Heart left ventricle (tissue), 16 donors: ENCODE measurements at regions of chr1 and their contacts with region 1.

Region 1: GRCh38 chr1:211578640-211579433 is at the start of gene SLC30A1:
- DNase-seq: peak; percentile 100
- ATAC-seq: peak; percentile 96 to 99 (median 98)
- H3K4me3 ChIP-seq: peak within 1 kb of the TSS; percentile 78 to 98 (median 90)
- H3K27ac ChIP-seq: peak within 1 kb of the TSS; percentile 92 to 99 (median 98)
- H3K4me1 ChIP-seq: peaks cover 0 to 66% (median 38%) of the 10 kb centered on the region in 12 donors
- H3K27me3 ChIP-seq: no peaks in the 10 kb centered on the region
- CTCF ChIP-seq: peak in 1 of 12 donors; percentile 25
- POLR2A ChIP-seq: peak; percentile 56 to 97
- total RNA-seq, gene SLC30A1: 8.6 to 29.2 (median 16.2) TPM

Region 2: DNA sequence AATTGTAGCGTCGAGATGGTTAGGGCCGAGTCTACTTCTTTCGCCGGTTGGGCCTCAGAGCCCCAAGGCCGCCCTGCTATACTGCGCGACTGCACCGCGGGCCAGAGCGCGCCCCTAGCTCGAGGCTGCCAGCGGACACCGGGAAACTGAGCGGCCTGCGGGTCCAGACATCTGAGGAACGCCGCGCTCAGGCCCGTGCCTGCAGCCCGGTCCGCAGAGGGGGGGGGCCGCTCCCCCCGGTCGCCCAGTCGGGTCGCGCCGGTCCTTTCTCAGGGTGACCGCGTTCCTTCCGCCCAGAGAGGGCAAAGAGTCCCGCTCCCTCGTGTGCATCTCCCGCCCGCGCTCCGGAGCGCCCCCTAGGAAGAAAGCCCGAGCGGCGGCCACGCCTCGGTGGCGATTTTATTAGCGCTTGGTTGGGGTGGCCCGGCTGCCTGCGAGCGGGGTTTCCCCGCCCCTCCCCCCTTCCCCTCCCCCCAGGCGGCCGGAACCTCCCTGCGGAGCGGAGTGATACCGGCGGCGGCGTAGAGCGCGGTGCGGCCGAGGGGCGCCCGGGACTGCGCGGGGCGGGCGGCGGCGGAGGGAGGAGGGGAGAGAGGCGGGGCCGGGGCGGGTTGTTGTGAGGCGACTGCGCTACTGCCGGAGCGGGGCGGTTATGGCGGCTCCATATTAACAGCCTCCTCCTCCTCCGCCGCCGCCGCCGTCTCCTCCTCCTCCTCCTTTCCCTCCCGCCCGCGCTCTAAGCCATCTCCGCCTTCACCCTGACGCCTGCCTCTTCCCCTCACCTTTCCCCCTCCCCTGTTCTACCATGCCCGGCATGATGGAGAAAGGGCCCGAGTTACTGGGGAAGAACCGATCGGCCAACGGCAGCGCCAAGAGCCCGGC is 319.8 kb before region 1 on chr1 and contains the start of gene RCOR3:
- intact Hi-C with region 1: loop called in 1 of 10 experiments (anchors 2 kb)
- DNase-seq: peak; percentile 96 to 98 (median 97)
- ATAC-seq: peak; percentile 83 to 94 (median 89)
- H3K4me3 ChIP-seq: peak within 1 kb of the TSS; percentile 70 to 98 (median 93)
- H3K27ac ChIP-seq: peak within 1 kb of the TSS; percentile 92 to 100 (median 98)
- H3K4me1 ChIP-seq: peaks cover 0 to 28% (median 16%) of the 10 kb centered on the region in 12 donors
- H3K27me3 ChIP-seq: no peaks in the 10 kb centered on the region
- CTCF ChIP-seq: peak; percentile 51 to 74 (median 62)
- POLR2A ChIP-seq: peak in 1 of 2 donors; percentile 69
- total RNA-seq, gene RCOR3: 28.9 to 60.1 (median 48.6) TPM

Region 3: DNA sequence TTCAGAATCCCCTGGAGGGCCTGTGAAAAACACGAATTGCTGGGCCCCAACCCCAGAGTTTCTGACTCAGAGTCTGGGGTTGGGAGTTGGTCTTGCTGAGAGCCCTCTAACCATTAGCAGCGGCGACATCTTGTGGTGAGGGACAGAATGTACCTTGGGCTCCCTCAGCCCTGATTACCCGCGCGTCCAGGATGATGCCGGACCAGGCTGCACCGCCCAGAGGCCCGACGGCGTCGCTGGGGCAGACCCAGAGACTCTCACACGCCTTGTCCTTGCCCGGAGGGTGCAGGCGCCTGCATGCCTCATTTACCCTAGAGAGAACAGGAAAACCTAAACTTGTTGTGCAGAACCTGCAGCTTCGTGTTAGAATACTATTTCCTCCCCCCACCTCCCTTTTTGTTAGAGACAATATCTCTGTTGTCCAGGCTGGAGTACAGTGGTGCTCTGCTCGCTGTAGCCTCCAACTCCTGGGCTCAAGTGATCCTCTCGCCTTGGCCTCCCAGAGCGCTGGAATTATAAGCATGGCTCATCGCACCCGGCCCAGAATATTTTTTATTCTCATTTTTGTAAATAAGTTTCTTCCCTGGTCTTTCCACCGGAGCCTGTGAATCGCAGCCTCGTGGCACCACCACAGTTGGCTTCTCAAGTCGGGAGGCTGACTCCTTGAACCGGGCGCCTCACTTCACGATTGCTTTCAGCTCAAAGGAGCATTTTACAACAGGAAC is 64.6 kb before region 1 on chr1:
- intact Hi-C with region 1: loop called in 6 of 10 experiments (anchors 2 to 10 kb)
- DNase-seq: peak; percentile 71 to 87 (median 81)
- ATAC-seq: peak; percentile 86 to 91 (median 88)
- H3K4me3 ChIP-seq: no peak overlapping the region
- H3K27ac ChIP-seq: no peak overlapping the region
- H3K4me1 ChIP-seq: peaks cover 0 to 17% (median 8%) of the 10 kb centered on the region in 12 donors
- H3K27me3 ChIP-seq: peaks cover 0 to 8% (median 0%) of the 10 kb centered on the region in 9 donors
- CTCF ChIP-seq: peak; percentile 64 to 86 (median 75)
- POLR2A ChIP-seq: no peak

Region 4: DNA sequence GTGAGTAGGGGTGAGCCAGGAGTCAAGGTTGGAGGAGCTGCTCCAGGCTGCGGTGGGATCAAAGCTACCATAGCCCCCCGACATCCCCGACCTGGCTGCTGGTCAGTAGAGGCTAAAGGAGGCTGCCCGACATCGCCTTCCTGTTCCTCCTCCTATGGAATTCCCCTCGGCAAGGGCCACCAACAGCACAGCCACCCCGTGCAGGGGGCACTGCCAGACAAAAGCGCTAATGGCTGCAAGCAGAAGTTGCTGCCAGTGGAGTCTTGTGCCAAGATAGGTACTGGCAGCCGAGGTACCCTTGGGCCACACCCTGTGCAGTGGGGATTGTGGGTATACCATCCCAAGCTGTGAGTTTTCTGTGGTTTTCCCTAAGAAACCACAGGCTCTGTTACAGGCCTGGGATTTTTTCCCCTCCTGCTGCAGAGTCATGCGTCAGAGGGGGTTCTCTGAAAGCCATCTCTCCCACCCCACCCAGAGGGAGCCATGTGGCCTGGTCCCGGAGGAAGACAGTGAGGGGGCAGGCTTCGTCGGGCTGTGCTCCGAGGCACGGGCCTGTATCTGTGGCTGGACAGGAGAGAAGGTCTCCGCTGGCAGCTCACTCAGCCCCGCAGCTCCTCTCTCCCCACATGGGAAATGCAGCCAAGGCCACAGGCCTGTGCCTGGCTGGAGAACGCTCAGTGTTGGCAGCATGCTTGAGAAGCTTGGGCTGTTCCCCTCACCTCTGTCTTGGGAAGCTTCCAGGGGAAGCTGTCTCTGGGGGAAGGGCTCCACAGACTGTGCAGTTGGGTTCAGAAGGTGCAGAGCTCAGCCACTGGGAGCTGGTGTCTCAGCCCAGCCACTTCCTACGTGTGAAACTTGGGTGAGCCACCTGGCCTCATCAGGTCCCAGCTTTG is 54.0 kb after region 1 on chr1:
- intact Hi-C with region 1: loop called in 4 of 10 experiments (anchors 5 kb)
- DNase-seq: peak; percentile 69 to 88 (median 78)
- ATAC-seq: peak; percentile 77 to 83 (median 81)
- H3K4me3 ChIP-seq: no peak overlapping the region
- H3K27ac ChIP-seq: peak overlapping the region in 10 of 12 donors; percentile 23 to 88 (median 82)
- H3K4me1 ChIP-seq: peaks cover 0 to 40% (median 17%) of the 10 kb centered on the region in 12 donors
- H3K27me3 ChIP-seq: no peaks in the 10 kb centered on the region
- CTCF ChIP-seq: no peak
- POLR2A ChIP-seq: no peak

Region 5: DNA sequence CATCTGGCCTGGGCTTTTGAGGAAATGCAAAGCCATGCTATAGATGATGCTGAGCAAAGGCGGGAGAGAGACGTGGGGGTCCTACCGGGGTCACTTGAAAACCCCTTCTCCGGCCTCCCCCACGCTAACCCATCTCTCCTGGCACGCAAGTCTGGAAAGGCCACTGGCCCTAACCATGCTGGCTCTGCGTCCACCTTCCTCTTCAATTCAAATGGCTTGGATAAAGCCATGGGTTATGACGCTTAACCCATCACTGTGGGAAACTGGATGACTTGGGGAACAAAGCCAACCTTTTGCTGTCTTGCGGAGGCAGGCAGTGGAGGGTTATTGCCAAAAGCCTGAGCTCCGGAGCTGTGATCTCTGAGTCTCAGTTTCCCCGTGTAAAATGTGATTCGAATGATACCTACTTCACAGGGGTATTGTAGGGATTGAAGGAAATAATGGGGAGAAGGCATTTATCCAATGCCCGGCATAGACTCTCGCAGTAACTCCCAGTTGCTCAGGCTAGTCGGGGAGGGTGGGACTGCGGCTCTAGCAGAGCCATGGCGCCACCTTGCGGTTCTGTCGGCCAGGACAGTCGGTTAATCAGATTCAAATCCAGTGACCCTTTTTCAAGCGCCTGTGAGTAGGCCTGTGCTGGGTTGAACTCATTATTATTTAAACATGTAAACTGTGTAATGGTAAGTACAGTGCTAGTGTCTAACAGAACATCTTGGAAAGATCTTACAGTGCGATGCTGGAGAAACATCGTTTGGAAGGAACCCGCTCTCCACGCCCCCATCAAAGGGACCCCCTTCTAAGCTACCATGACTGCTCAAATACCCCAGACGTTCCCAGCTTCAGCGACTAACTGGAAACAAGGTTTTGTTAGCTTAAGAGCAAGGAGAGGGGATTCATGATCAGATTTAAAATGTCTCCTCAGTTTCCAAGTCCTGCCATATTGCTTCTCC is 76.3 kb after region 1 on chr1:
- intact Hi-C with region 1: loop called in 7 of 10 experiments (anchors 1 to 5 kb)
- DNase-seq: peak; percentile 84 to 91 (median 87)
- ATAC-seq: peak; percentile 87 to 98 (median 94)
- H3K4me3 ChIP-seq: peak overlapping the region in 6 of 12 donors; percentile 0 to 32 (median 18)
- H3K27ac ChIP-seq: no peak overlapping the region
- H3K4me1 ChIP-seq: peaks cover 0 to 3% (median 0%) of the 10 kb centered on the region in 12 donors
- H3K27me3 ChIP-seq: no peaks in the 10 kb centered on the region
- CTCF ChIP-seq: peak; percentile 87 to 97 (median 93)
- POLR2A ChIP-seq: no peak

Region 6: DNA sequence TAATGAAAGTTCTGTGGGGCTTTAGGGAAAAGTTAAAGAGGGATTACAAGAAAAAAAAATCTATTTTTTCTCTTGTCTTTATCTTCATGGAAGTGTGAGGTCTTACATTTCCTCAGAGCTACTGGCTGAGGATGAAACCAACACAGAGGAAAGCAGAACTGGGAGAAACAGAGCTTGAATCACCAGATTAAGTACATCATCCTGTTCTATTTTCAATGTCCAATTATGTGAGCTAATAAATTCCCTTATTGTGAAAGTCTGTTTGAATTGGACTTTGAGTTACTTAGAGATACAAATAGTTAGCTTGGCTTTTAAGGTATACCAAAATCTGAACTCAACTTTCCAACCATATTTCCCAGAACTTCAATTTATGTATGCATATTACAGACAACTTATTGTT is 182.6 kb after region 1 on chr1:
- intact Hi-C with region 1: no loop called
- DNase-seq: no peak
- ATAC-seq: no peak
- H3K4me3 ChIP-seq: no peak overlapping the region
- H3K27ac ChIP-seq: no peak overlapping the region
- H3K4me1 ChIP-seq: peaks cover 0 to 6% (median 0%) of the 10 kb centered on the region in 12 donors
- H3K27me3 ChIP-seq: no peaks in the 10 kb centered on the region
- CTCF ChIP-seq: no peak
- POLR2A ChIP-seq: no peak

Region 7: GRCh38 chr1:211830330-211831142 is 251.7 kb after region 1 on chr1 and contains the start of gene LPGAT1:
- intact Hi-C with region 1: loop called in 1 of 10 experiments (anchors 10 kb)
- DNase-seq: peak; percentile 82 to 90 (median 83)
- ATAC-seq: peak; percentile 93 to 98 (median 96)
- H3K4me3 ChIP-seq: peak within 1 kb of the TSS; percentile 54 to 99 (median 80)
- H3K27ac ChIP-seq: peak within 1 kb of the TSS; percentile 85 to 97 (median 91)
- H3K4me1 ChIP-seq: peaks cover 0 to 53% (median 20%) of the 10 kb centered on the region in 12 donors
- H3K27me3 ChIP-seq: no peaks in the 10 kb centered on the region
- CTCF ChIP-seq: peak; percentile 50 to 86 (median 77)
- POLR2A ChIP-seq: peak in 1 of 2 donors; percentile 41
- total RNA-seq, gene LPGAT1: 19.0 to 40.0 (median 30.9) TPM